Dendritic cell treated with granulocyte-macrophage colony-stimulating factor and Interleukin-4, amounts not matched to agents 40 ng/mL and 50 ng/mL, for 4 days (primary cell): ENCODE measurements at regions of chr10 and their contacts with region 1.

Region 1: GRCh38 chr10:11178606-11179515 is 161.2 kb downstream of the CELF2 start:
- H3K4me3 Mint-ChIP-seq: peak overlapping the region; percentile 45
- H3K27ac Mint-ChIP-seq: peak overlapping the region; percentile 85
- H3K4me1 Mint-ChIP-seq: peaks cover 76% of the 10 kb centered on the region
- H3K27me3 Mint-ChIP-seq: no peaks in the 10 kb centered on the region

Region 2: DNA sequence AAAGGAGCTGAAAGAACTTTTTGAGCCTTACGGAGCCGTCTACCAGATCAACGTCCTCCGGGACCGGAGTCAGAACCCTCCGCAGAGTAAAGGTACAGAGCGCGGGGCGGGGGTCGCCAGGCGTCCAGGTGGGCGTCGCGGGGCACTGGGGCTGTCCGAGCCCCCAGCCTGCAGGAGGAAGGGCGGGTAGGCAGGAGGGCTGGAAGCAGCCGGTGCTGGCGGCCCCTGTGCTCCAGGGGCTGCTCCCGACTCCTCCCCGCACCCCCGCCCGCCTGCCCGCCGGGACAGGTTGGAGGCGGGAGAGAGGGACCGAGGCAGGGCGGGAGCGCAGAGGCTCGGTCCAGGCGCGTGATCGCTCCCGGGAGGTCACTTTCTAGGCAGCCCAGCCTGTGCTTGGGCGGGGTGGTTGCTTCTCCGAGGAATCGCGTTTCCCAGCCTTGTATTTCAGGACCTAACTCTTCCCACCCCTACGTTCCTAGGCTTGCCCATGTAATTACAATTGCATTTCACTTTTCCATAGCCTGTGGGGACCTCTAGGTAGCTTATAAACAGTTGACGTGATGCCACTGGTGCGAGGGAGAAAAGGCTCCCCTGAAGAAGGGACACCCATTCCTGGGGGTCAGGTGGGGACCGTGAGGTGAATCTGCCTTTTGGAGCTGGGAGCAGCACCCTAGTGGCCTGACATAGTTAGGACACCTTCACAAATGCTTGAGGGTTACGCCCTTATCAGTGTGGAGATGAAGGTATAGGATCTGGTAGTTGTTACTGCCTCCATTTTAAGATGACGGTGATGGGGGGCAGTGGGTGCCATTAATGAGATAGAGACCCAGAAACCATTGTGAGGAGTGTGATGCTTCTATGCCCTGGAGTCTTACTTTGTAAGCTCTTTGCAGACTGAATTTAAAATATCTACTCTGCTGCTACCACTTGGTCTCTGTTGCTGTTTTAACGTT is 13.0 kb before region 1 on chr10:
- intact Hi-C with region 1: loop called (anchors 2 kb)
- H3K4me3 Mint-ChIP-seq: no peak overlapping the region
- H3K27ac Mint-ChIP-seq: no peak overlapping the region
- H3K4me1 Mint-ChIP-seq: peaks cover 48% of the 10 kb centered on the region
- H3K27me3 Mint-ChIP-seq: no peaks in the 10 kb centered on the region

Region 3: GRCh38 chr10:11242443-11243387 is 63.9 kb after region 1 on chr10:
- intact Hi-C with region 1: loop called (anchors 10 kb)
- H3K4me3 Mint-ChIP-seq: peak overlapping the region; percentile 40
- H3K27ac Mint-ChIP-seq: no peak overlapping the region
- H3K4me1 Mint-ChIP-seq: peaks cover 57% of the 10 kb centered on the region
- H3K27me3 Mint-ChIP-seq: no peaks in the 10 kb centered on the region